Activated naive CD4-positive, alpha-beta T cell treated with anti-CD3 and anti-CD28 coated beads for 36 hours (primary cell): ENCODE measurements at regions of chr3 and their contacts with region 1.

Region 1: DNA sequence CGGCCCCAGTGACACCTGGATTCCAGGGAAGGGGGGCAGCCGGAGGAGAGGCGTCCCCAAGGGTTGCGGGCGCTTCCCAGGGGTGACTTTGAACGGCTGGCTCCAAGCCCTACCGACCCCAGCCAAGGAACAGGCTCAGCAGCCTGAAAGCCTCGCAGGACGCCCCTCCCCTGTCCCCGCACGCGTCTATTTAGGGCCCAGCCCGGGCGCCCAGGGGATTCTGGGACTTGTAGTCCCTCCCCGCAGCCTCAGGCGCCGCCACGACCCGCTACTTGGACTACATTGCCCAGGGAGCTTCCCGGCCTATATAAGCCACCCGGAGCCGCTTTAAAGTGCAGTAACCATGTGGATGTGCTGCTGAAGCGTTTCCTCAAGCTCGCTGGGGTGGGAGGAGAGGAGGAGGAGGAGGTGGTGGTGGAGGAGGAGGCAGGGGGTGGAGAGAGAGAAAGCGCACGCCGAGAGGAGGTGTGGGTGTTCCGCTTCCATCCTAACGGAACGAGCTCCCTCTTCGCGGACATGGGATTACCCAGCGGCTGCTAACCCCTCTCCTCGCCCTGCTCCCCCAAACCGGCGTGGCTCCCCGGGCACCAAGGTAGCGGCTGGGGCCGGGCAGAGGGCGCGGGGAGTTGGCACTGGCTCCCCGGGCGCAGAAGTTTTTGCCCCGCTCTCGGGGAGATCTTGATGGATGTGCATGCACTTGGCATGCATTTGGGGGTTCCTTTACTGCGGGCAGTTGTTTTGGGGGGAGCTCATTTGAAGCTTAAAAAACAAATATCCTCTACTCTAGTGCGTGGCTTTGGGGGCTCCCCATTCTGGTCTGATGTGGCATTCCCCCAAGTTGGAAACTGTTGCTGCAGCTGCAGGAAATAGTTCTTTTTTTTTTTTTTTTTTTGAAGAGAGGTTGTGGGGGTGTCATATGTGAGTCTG is at the start of gene ITPR1:
- DNase-seq: peak; percentile 98
- H3K4me3 Mint-ChIP-seq: peak within 1 kb of the TSS; percentile 87
- H3K27ac Mint-ChIP-seq: peak within 1 kb of the TSS; percentile 83
- H3K4me1 Mint-ChIP-seq: peaks cover 37% of the 10 kb centered on the region
- H3K27me3 Mint-ChIP-seq: peaks cover 4% of the 10 kb centered on the region
- total RNA-seq, gene ITPR1: 38.5 to 41.1 TPM

Region 2: GRCh38 chr3:3179407-3180094 is 1313.7 kb before region 1 on chr3 and contains the start of gene CRBN:
- CTCF ChIA-PET with region 1: no interaction called
- intact Hi-C with region 1: loop called (anchors 5 kb)
- DNase-seq: peak; percentile 90
- H3K4me3 Mint-ChIP-seq: peak within 1 kb of the TSS; percentile 93
- H3K27ac Mint-ChIP-seq: peak within 1 kb of the TSS; percentile 93
- H3K4me1 Mint-ChIP-seq: peaks cover 47% of the 10 kb centered on the region
- H3K27me3 Mint-ChIP-seq: no peaks in the 10 kb centered on the region
- total RNA-seq, gene CRBN: 44.1 to 48.0 TPM

Region 3: GRCh38 chr3:4231041-4231440 is 262.2 kb before region 1 on chr3:
- CTCF ChIA-PET with region 1: no interaction called
- intact Hi-C with region 1: no loop called
- DNase-seq: no peak
- H3K4me3 Mint-ChIP-seq: no peak overlapping the region
- H3K27ac Mint-ChIP-seq: no peak overlapping the region
- H3K4me1 Mint-ChIP-seq: no peaks in the 10 kb centered on the region
- H3K27me3 Mint-ChIP-seq: no peaks in the 10 kb centered on the region

Region 4: GRCh38 chr3:4373669-4374068 is 119.6 kb before region 1 on chr3:
- CTCF ChIA-PET with region 1: no interaction called
- intact Hi-C with region 1: no loop called
- DNase-seq: no peak
- H3K4me3 Mint-ChIP-seq: no peak overlapping the region
- H3K27ac Mint-ChIP-seq: no peak overlapping the region
- H3K4me1 Mint-ChIP-seq: no peaks in the 10 kb centered on the region
- H3K27me3 Mint-ChIP-seq: no peaks in the 10 kb centered on the region

Region 5: GRCh38 chr3:4409415-4409814 is 83.9 kb before region 1 on chr3:
- CTCF ChIA-PET with region 1: no interaction called
- intact Hi-C with region 1: loop called (anchors 1 kb)
- DNase-seq: peak; percentile 38
- H3K4me3 Mint-ChIP-seq: no peak overlapping the region
- H3K27ac Mint-ChIP-seq: no peak overlapping the region
- H3K4me1 Mint-ChIP-seq: peaks cover 24% of the 10 kb centered on the region
- H3K27me3 Mint-ChIP-seq: no peaks in the 10 kb centered on the region

Region 6: GRCh38 chr3:4504340-4505261 is 11.3 kb after region 1 on chr3:
- CTCF ChIA-PET with region 1: interaction called, 18 read pairs
- intact Hi-C with region 1: loop called (anchors 1 kb)
- DNase-seq: peak; percentile 47
- H3K4me3 Mint-ChIP-seq: peak overlapping the region; percentile 70
- H3K27ac Mint-ChIP-seq: peak overlapping the region; percentile 74
- H3K4me1 Mint-ChIP-seq: peaks cover 45% of the 10 kb centered on the region
- H3K27me3 Mint-ChIP-seq: no peaks in the 10 kb centered on the region

Region 7: GRCh38 chr3:4584456-4585249 is 91.4 kb after region 1 on chr3:
- CTCF ChIA-PET with region 1: interaction called, 4 read pairs
- intact Hi-C with region 1: loop called (anchors 1 kb)
- DNase-seq: peak; percentile 72
- H3K4me3 Mint-ChIP-seq: peak overlapping the region; percentile 70
- H3K27ac Mint-ChIP-seq: peak overlapping the region; percentile 83
- H3K4me1 Mint-ChIP-seq: peaks cover 61% of the 10 kb centered on the region
- H3K27me3 Mint-ChIP-seq: no peaks in the 10 kb centered on the region

Region 8: DNA sequence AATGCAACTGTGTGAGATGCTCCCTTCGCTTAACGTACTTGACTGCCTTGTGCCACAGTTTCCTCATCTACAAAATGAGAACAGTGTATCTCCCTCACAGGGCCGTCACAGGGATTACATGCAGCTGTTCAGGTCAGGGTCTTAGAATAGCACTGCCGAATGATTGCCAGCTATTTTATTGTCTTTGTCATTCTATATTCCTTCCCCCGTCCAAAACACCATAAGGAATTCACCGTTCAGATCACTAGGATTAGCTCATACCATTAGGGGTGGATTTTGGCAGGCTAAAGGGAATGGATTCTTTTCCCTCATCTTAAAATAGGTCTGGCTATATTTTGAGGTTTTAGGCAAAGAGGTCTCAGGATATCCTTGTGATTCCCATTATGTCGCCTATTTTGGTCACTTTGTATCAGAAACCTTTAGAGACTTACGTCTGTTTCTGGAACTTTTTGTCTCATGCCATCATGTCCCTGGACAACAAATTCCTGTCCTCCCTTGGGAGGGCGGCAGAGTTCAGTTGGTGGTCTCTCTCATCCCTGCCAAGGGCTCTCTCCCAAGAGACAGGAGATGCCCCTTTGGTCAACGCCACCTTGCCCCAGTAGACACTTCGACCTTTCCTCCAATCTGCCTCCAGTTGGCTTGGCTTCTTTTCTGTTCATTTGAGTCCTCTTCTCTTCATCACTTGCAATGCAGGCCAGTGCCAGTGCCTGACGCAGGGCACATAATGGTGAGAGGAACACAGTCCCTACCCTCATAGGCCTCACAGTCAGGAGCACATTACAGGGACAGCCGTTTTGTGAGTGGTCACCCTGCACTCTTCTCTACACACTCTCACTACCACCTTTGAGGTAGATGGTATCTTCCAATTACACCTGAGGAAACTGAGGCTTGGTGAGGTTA is 314.4 kb after region 1 on chr3:
- CTCF ChIA-PET with region 1: no interaction called
- intact Hi-C with region 1: no loop called
- DNase-seq: no peak
- H3K4me3 Mint-ChIP-seq: no peak overlapping the region
- H3K27ac Mint-ChIP-seq: no peak overlapping the region
- H3K4me1 Mint-ChIP-seq: peaks cover 28% of the 10 kb centered on the region
- H3K27me3 Mint-ChIP-seq: no peaks in the 10 kb centered on the region

Region 9: GRCh38 chr3:4906107-4906621 is 412.9 kb after region 1 on chr3:
- CTCF ChIA-PET with region 1: no interaction called
- intact Hi-C with region 1: loop called (anchors 5 kb)
- DNase-seq: peak; percentile 61
- H3K4me3 Mint-ChIP-seq: no peak overlapping the region
- H3K27ac Mint-ChIP-seq: no peak overlapping the region
- H3K4me1 Mint-ChIP-seq: peaks cover 72% of the 10 kb centered on the region
- H3K27me3 Mint-ChIP-seq: no peaks in the 10 kb centered on the region

Region 10: DNA sequence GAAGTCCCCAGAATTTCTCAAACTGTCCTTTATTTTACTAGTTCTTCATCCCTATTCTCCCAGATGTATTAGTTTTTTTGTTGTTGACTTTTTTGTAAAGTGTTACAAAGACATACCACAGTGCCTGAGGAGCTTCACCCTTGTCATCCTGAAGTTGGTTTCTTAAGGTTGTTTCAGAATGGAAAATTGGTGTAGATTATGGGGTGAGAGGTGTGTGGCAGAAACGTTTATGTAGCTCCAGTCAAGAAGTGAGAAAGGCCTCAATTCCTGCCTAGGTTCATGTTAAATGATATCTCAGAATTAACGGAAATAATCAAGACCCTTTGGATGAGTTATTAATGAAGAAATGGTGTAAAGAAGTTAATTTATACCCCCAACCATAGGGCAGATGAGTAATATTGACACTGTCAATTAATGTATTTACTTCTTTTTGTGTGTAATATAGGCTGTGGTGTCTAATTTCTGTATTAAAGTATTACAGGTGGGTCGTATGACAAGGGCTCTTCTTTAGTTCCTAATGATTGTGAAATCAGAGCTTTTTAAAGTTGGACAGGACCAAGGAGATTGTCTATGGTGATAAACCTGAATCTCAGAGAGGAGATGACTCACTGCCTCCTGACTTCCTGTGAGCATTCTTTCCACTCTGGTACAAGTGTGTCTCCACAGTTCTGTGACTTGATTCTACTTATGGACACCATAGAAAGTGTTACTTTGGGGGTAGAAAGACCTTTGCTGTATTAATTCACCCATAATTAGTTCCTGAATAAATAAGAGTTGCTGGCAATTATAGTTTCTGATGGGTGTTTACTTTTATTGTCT is 701.3 kb after region 1 on chr3:
- CTCF ChIA-PET with region 1: interaction called, 3 read pairs
- intact Hi-C with region 1: loop called (anchors 2 kb)
- DNase-seq: peak; percentile 66
- H3K4me3 Mint-ChIP-seq: peak overlapping the region; percentile 25
- H3K27ac Mint-ChIP-seq: peak overlapping the region; percentile 98
- H3K4me1 Mint-ChIP-seq: peaks cover 84% of the 10 kb centered on the region
- H3K27me3 Mint-ChIP-seq: no peaks in the 10 kb centered on the region

Region 11: GRCh38 chr3:5330152-5330810 is 837.0 kb after region 1 on chr3:
- CTCF ChIA-PET with region 1: no interaction called
- intact Hi-C with region 1: no loop called
- DNase-seq: peak; percentile 63
- H3K4me3 Mint-ChIP-seq: no peak overlapping the region
- H3K27ac Mint-ChIP-seq: peak overlapping the region; percentile 15
- H3K4me1 Mint-ChIP-seq: peaks cover 23% of the 10 kb centered on the region
- H3K27me3 Mint-ChIP-seq: peaks cover 3% of the 10 kb centered on the region